Posterior cingulate gyrus (tissue), 11 donors: ENCODE measurements at regions of chr18 and their contacts with region 1.

Region 1: DNA sequence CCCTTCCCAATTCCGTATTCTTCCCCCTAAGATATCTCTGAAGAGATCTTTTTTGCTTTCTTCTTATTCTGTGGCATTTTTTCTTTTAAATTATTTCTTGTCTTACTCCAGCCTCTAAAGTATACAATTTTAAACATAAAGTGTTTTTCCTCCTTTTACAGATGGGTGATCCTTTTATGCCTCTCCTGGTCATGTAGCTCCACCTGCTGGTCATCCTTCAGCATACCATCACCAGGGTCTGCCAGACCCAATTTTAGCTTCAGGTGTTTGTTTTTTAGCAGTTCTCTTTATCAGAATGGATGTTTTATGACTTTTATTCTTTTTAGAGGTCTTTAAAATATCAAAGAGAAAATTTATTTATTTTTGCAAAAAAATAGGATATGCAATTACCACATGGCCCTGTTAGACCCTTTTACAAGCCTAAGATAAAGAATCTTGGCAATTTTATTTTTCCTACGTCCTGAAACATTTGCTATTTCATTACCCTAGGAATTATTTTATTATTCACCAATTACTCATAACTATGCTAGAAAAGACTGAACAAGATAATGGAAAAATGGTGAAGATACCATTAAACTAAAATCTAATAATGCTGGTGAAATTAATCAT is 55.5 kb downstream of the PIGN start:
- DNase-seq: peak in 6 of 10 donors; percentile 16 to 86 (median 56)

Region 2: GRCh38 chr18:60668583-60668982 is 1462.8 kb before region 1 on chr18:
- intact Hi-C with region 1: loop called (anchors 5 kb)
- DNase-seq: no peak

Region 3: DNA sequence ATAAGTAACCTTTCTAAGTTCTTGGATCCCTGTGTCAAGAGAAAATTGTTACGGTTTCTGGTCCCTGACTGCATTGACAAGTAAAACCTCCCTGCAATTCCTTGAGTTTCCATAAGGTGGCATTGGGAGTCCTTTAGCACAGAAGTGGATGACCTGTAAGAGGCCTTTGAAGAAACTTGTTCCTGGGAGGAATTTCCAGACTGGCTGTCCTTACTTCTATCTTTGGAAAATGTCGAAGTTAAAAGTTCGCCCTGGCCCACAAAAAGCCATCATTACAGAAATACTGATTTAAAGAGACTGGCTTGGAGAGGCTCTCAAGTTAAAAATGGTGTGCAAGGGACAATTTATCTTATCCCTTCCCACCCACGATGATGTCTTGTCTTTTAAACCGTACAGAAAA is 579.8 kb before region 1 on chr18:
- intact Hi-C with region 1: loop called (anchors 2 kb)
- DNase-seq: no peak

Region 4: DNA sequence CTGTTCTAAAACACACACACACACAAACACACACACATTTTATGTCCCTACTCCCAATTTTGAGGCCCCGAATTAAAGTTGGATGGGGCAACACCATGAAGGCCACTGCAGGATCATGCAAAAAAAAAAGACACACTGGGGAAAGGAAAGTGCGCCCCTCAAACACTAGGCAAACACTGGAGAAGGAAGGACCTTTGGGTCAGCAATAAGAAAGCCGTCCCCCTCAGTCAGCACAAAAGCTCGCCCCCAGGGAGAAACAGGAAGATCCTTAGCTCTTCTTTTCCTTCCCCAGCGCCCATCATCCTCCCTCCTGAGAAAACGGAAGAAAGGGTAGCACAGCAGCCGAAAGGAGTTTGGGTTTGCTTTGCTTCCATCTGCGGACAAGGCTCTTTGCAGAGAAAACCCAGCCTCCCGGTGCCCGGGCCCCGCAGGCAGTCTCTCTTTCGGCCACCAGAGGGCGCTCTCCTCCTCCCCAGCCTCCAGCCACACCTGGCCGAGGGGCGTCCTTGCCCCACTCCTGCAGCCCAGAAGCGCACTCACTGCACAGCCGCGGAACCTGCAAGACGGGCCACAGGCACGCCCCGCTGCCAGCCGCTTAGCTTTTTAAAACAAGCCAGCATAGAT is 549.7 kb before region 1 on chr18:
- intact Hi-C with region 1: loop called (anchors 1 kb)
- DNase-seq: peak; percentile 35 to 95 (median 78)

Region 5: DNA sequence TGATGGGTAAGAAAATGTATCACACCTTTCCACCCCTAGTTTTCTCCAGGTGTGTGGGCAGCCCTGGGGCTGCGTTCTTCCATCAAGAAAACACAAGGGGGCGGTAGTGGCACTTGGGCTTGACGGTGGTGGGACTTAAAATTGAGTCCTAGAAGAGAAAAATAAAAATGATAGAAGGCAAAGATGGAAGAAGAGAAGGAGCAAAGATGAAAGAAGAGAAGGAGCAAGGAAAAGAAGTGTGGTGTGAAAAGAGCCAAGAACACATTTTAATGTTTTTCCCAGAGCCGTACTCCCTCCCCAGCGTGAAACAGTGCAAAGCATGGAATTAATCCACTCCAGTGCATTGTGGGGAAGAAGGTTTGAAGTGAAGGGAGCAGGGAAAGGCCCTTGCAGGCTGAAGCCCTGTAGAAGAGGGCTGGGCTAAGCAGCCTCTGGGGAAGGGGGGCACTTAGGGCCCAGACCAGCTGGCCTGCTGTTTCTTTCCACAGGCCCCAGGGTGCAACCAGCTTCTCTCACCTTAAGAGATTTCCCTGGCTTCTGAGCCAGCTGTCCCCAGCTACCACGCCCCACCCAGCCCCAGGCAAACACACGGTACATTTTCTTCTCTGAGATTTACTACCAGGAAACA is 495.4 kb before region 1 on chr18:
- intact Hi-C with region 1: loop called (anchors 5 kb)
- DNase-seq: peak in 6 of 10 donors; percentile 22 to 88 (median 51)

Region 6: GRCh38 chr18:61893971-61894750 is 237.2 kb before region 1 on chr18:
- intact Hi-C with region 1: loop called (anchors 10 kb)
- DNase-seq: peak; percentile 51 to 95 (median 71)

Region 7: DNA sequence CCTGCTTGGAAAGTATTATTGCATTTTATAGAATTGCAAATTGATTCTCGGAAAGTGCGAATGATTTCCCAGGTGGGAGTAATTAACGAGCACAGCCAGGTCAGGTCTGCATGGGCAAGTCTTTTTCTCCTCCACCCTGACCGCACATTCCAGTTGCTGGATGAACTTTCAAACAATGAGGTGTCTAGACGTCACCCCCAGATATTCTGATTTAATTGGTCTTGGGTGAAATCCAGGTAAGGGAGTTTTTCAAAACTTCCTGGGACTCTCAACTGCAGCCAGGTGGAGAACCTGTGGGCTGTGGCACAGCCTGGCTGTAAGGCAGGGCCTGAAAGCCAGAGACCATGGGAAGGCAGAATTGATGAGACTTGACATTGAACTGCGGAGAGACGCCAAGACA is 222.7 kb before region 1 on chr18:
- intact Hi-C with region 1: no loop called
- DNase-seq: no peak

Region 8: GRCh38 chr18:62663731-62664336 is 532.4 kb after region 1 on chr18:
- intact Hi-C with region 1: no loop called
- DNase-seq: no peak